WTC11 (cell line): ENCODE measurements at regions of chr17 and their contacts with region 1.

Region 1: DNA sequence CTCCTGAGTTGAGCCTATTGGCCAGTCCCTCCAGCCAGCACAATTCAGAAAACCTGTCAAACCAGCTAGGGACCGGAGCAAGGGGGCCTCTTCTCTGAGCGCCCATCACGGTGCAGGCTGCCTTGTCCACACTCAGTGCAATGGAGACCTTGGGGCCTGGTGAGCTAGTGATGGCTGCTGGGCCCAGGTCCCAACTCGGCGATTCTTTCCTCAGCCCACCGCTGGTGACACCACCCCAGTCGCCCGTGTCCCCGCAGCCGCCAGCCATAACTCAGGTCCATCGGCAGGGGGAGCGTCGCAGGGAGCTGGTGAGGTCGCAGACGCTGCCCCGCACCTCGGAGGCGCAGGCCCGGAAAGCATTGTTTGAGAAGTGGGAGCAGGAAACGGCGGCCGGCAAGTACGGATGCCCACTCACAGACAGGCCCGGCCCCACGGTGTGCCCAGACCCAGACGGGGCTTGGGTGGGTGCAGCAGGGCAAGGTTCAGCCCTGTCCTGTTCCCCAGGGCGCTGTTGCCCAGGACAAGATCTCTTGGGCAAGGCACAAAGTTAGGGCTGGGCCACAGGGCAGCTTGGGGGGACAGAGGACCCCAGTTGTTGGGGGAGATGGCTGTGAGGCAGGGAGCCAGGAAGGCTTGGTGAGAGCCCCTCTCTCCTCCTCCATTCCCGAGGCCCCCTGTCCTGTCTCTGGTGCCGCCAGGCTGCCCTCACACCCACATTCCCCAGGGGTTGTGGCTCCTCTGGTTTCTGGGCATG is 10.8 kb downstream of the SMTNL2 start:
- DNase-seq: peak; percentile 76
- ATAC-seq: peak; percentile 75
- H3K4me3 Mint-ChIP-seq: no peak overlapping the region
- H3K27ac Mint-ChIP-seq: no peak overlapping the region
- H3K4me1 Mint-ChIP-seq: peaks cover 25% of the 10 kb centered on the region
- H3K27me3 Mint-ChIP-seq: no peaks in the 10 kb centered on the region
- CTCF ChIP-seq: peak; percentile 55

Region 2: DNA sequence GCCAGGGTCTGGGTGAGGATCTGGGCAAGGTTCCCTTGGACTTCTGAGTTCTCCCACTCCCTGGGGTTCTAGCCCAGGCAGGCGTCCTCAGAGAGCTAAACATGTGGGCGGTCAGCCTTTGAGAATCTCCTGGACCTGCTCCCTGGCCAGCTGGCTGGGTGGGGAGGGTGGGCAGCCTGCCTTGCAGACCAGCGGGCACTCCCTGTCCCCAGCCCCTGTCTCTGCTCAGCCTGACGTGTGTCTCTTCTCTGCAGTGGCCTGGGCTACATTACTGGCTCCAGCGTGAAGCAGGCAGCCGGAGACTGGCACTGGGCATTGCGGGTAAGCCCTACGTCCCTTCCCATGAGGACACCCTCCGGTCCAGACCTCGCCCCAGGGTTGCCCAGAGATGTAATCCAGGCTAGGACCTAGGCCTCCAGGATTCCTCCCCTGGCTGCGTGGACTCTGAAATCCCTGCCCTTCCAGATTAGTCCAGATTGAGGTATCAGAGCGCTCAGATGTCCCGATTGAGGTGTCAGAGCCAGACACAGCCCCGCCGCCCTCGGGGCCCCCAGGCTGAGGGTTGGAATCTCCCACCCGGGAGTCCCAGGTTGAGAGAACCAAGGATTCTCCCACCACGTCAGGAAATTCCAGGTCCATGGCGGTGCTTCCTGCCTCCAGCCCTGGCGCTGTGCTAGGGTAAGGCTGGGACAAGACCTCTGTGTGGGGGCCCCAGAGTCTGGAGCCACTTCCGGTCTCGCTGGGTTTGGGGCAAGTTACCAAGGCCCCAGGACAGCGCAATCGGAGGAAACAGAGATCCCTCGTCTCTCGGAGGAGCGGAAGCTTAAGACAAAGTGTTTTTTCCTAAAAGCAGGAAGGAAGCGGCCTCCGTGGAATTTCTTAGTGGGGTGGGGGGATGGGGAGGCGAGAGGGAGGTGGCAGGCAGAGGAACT is 64.0 kb before region 1 on chr17:
- CTCF ChIA-PET with region 1: no interaction called
- POLR2A ChIA-PET with region 1: no interaction called
- DNase-seq: no peak
- ATAC-seq: no peak
- H3K4me3 Mint-ChIP-seq: no peak overlapping the region
- H3K27ac Mint-ChIP-seq: no peak overlapping the region
- H3K4me1 Mint-ChIP-seq: peaks cover 16% of the 10 kb centered on the region
- H3K27me3 Mint-ChIP-seq: peaks cover 88% of the 10 kb centered on the region
- CTCF ChIP-seq: no peak

Region 3: GRCh38 chr17:4576729-4577322 is 18.3 kb before region 1 on chr17:
- CTCF ChIA-PET with region 1: interaction called, 10 read pairs
- POLR2A ChIA-PET with region 1: no interaction called
- DNase-seq: peak; percentile 60
- ATAC-seq: peak; percentile 90
- H3K4me3 Mint-ChIP-seq: no peak overlapping the region
- H3K27ac Mint-ChIP-seq: no peak overlapping the region
- H3K4me1 Mint-ChIP-seq: peaks cover 25% of the 10 kb centered on the region
- H3K27me3 Mint-ChIP-seq: no peaks in the 10 kb centered on the region; the same call in none of the 2 replicates
- CTCF ChIP-seq: no peak

Region 4: DNA sequence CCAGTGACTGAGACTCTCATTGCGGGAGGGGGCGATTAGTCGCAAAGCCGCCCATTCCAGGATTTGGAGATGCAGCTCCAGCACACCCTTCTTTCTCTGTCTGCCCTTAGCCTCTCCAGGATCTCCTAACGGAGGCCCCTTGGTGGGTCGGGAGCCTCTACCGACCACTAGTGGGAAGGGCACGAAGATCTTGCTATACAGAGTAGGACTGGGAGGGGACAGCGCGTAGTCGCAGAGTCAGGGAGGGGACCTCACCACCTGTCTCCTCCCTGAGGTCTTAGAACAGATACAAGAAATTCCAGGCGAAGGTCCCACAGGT is 11.4 kb before region 1 on chr17:
- CTCF ChIA-PET with region 1: interaction called, 23 read pairs
- POLR2A ChIA-PET with region 1: interaction called, 4 read pairs
- DNase-seq: peak; percentile 60
- ATAC-seq: peak; percentile 76
- H3K4me3 Mint-ChIP-seq: peak overlapping the region; percentile 86
- H3K27ac Mint-ChIP-seq: no peak overlapping the region
- H3K4me1 Mint-ChIP-seq: peaks cover 22% of the 10 kb centered on the region
- H3K27me3 Mint-ChIP-seq: peaks cover 40% of the 10 kb centered on the region
- CTCF ChIP-seq: peak; percentile 24; the same call in 1 of the 2 replicates

Region 5: DNA sequence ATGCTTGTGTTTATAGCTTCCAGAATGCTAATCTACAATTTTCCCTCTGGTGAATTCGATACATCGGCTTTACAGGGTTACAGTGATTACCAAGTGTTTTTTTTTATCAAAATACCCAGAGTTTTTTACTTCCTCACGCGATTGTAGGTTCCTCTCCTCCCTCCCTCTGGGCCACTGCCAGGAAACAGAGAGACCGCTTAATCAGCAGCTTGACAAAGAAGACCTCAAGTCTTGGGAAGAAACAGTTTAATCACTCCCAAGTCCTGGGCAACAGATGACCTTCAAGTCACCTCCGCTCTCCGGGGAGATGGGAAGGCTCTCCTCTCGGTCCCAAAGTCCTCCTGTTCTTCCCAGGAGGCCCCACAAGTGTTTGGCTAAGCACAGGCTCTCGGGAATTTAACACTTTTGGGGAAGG is 12.7 kb after region 1 on chr17:
- CTCF ChIA-PET with region 1: interaction called, 16 read pairs
- POLR2A ChIA-PET with region 1: no interaction called
- DNase-seq: no peak
- ATAC-seq: peak; percentile 44; the same call in 1 of the 2 replicates
- H3K4me3 Mint-ChIP-seq: no peak overlapping the region
- H3K27ac Mint-ChIP-seq: peak overlapping the region; percentile 48; the same call in 1 of the 2 replicates
- H3K4me1 Mint-ChIP-seq: peaks cover 11% of the 10 kb centered on the region
- H3K27me3 Mint-ChIP-seq: no peaks in the 10 kb centered on the region
- CTCF ChIP-seq: no peak

Region 6: GRCh38 chr17:4625181-4625617 is 30.1 kb after region 1 on chr17:
- CTCF ChIA-PET with region 1: interaction called, 30 read pairs
- POLR2A ChIA-PET with region 1: interaction called, 3 read pairs
- DNase-seq: no peak
- ATAC-seq: peak; percentile 38; the same call in 1 of the 2 replicates
- H3K4me3 Mint-ChIP-seq: no peak overlapping the region
- H3K27ac Mint-ChIP-seq: no peak overlapping the region
- H3K4me1 Mint-ChIP-seq: peaks cover 8% of the 10 kb centered on the region
- H3K27me3 Mint-ChIP-seq: no peaks in the 10 kb centered on the region
- CTCF ChIP-seq: no peak

Region 7: GRCh38 chr17:4703330-4703691 is 108.2 kb after region 1 on chr17:
- CTCF ChIA-PET with region 1: no interaction called
- POLR2A ChIA-PET with region 1: no interaction called
- DNase-seq: no peak
- ATAC-seq: no peak
- H3K4me3 Mint-ChIP-seq: peak overlapping the region; percentile 97
- H3K27ac Mint-ChIP-seq: peak overlapping the region; percentile 86
- H3K4me1 Mint-ChIP-seq: peaks cover 45% of the 10 kb centered on the region
- H3K27me3 Mint-ChIP-seq: peaks cover 1% of the 10 kb centered on the region
- CTCF ChIP-seq: no peak